Right cardiac atrium (tissue), 5 donors: ENCODE measurements at regions of chr11 and their contacts with region 1.

Region 1: DNA sequence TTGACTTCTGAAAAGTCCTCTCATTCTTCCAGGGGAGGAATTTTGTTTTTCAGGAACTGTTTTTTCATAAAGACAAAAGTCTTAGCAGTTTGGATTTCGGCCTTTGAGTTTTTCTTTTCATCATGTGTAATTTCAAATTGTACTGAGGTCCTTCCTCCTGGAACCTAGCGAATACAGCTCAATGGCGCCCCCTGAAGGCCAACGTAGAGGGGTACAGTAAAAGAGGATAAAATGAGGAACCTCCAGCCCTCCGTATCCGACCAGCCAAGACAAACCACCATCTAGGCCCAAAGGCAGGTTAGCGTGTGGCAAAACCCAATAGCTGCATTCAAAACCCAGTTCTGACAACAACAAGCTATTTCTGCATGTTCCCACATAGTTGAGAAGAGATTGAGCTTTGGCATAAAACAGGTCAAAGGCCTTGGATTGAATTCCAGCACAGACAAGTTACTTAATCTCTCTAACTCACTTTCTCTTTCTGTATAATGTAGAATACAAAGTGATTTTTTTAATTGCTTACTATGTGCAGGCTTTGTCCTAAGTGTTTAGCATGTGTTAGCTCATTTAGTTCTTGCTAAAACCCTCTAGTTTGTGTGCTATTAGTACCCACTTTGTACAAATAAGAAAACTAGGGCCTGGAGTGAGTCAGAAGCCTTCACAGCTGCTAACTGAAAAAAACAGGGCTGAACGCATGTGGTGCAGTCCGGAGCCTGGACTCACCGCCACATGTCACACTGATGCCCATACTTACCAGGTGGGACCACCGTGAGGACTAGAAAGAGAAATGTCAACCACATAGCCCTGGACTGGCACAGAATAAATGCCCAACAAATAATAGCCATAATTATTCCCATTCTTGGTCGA is 43.2 kb upstream of the ETS1 start:
- DNase-seq: peak; percentile 90 to 93 (median 93)
- ATAC-seq: peak; percentile 76 to 88
- H3K4me3 ChIP-seq: no peak overlapping the region
- H3K27ac ChIP-seq: no peak overlapping the region
- H3K4me1 ChIP-seq: peaks cover 2% of the 10 kb centered on the region
- H3K27me3 ChIP-seq: no peaks in the 10 kb centered on the region

Region 2: DNA sequence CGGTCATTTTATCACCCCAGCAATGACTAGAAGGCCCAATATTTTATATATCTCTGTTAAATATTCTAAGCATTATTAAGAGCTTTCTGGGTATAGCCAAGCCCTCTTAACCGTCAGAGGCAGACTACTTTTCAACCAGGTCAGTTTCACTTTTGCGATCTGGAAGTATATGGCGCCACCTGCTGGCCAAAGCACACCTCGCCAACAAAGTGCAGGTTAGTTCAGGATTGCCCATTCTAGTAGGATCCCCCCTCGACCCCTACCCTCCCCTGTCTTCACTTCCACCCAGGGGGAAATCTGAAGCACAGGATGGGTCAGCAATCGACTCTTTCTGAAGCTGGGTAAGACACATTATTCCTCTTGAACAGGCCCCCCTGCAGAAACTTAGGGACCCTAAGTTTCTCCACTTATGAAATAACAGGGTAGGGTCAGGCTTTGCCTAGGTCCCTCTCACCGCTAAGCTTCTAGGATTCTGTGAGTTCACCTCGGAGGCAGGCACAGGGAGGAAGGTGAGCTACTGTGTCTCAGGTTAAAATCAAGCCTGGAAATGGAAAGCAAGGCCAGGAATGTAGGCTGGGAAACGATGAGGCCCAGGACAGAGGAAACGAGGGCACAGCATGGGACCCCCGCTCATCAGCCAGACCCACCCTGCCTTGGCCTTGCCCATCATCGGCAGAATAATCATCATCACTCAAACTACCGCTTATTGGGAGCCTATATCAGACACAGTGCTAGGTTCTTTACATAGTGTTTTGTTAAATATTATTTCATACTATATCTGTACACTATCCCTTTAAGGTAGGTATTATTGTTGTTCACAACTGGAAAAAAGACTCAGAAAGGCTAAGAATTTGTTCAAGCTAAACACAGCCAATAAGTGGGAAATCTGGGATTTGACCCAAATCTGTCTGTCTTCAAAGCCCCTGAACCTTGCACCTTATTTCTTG is 200.8 kb after region 1 on chr11:
- intact Hi-C with region 1: loop called in 2 of 4 experiments (anchors 5 to 10 kb)
- DNase-seq: peak; percentile 76 to 91 (median 90)
- ATAC-seq: peak; percentile 70 to 77
- H3K4me3 ChIP-seq: no peak overlapping the region
- H3K27ac ChIP-seq: no peak overlapping the region
- H3K4me1 ChIP-seq: peaks cover 7% of the 10 kb centered on the region
- H3K27me3 ChIP-seq: no peaks in the 10 kb centered on the region